SK-N-SH (cell line): ENCODE measurements at regions of chr16 and their contacts with region 1.

Region 1: GRCh38 chr16:25224731-25225319 is 8.1 kb downstream of the AQP8 start:
- DNase-seq: no peak
- H3K4me3 ChIP-seq: no peak overlapping the region
- H3K27ac ChIP-seq: no peak overlapping the region
- H3K4me1 ChIP-seq: no peaks in the 10 kb centered on the region
- H3K27me3 ChIP-seq: no peaks in the 10 kb centered on the region
- CTCF ChIP-seq: no peak
- EP300 ChIP-seq: no peak
- RAD21 ChIP-seq: no peak

Region 2: DNA sequence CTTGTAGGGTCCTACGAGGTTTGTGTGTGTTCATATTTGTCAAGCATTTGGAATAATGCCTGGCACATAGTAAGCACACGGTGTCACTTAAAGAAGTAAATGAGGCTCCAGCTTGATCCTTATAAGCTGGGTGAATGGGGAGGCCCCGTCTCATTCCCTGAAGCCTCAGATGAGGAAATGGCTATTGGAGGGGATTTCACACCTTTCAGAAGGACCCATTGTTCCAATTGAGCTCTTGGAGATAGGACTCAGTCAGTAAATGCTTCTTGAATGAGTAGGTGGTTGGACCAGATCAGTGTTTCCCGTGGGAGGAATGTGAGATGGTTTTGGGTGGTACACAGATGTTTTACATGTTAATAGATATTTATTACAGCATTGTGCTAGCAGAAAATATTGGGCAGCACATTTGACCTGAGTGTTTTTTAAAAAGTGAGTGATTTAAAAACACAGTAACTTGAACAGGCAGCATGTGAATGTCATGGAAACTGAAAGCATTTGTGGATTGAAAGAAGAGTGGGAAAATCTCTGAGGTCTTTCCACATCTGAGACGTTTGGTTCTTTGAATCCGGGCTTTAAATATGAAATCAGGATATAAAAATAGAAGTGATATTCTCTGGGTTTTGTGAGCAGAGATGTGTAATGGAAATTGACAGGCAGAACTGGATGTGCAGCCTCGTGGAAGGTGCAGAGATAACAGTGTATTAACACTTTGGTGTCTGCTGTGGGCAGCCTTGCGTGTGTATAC is 173.2 kb before region 1 on chr16:
- CTCF ChIA-PET with region 1: interaction called, 10 read pairs
- POLR2A ChIA-PET with region 1: no interaction called
- DNase-seq: no peak
- H3K4me3 ChIP-seq: no peak overlapping the region
- H3K27ac ChIP-seq: peak overlapping the region in 1 of 2 experiments; percentile 91; a peak in 1 of 4 replicates
- H3K4me1 ChIP-seq: peaks cover 5 to 16% of the 10 kb centered on the region in 2 experiments; a peak in 3 of 4 replicates
- H3K27me3 ChIP-seq: no peaks in the 10 kb centered on the region
- CTCF ChIP-seq: no peak
- EP300 ChIP-seq: no peak
- RAD21 ChIP-seq: no peak